Activated naive CD4-positive, alpha-beta T cell treated with anti-CD3 and anti-CD28 coated beads for 36 hours (primary cell): ENCODE measurements at regions of chr11 and their contacts with region 1.

Region 1: GRCh38 chr11:123407130-123407995 is 22.7 kb upstream of the GRAMD1B start:
- DNase-seq: peak; percentile 83
- H3K4me3 Mint-ChIP-seq: peak overlapping the region; percentile 61
- H3K27ac Mint-ChIP-seq: peak overlapping the region; percentile 37
- H3K4me1 Mint-ChIP-seq: peaks cover 36% of the 10 kb centered on the region
- H3K27me3 Mint-ChIP-seq: peaks cover 18% of the 10 kb centered on the region

Region 2: DNA sequence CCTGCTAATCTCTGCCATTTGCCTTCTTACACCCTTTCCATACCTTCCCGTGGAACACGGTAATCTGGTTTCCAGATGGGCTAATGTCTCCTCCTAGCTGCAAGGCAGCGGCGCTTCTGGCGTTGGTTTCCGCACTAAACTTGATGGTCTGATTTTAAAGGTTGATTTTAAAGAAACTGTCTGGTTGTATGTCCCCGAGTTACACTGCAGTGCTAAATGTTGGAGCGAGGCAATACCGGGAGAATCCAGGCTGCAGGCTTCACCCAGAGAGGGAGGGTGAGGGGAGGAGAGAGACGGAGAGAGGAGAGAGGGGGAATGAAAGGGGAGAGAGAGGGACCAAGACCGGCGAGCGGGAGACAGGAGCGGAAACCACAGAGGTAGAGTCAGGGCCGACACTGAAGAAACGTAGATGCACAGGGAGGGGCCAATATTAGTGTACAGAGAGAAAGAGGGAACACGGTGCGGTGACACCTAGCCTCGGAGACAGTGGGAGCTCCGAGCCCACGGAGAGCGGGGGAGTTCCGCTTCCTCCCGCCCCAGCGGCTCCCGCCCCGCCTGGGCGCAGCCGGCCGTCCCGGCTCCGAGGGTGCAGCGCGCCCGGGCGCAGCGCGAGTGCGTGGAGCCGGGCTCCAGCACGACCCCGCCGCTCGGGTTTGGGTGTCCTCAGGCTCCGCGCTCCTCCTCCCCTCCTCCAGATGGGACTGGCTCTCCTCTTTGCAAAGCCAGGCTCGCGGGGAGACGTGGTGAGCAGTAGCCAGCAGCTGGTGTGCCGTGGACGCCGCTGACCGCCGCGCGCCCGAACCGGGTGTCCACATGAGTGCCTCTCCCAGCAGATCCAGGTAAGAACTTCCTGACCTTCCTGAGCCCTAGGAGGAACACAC is 49.2 kb before region 1 on chr11:
- CTCF ChIA-PET with region 1: interaction called, 23 read pairs
- intact Hi-C with region 1: loop called (anchors 1 kb)
- DNase-seq: peak; percentile 71
- H3K4me3 Mint-ChIP-seq: peak overlapping the region; percentile 87
- H3K27ac Mint-ChIP-seq: peak overlapping the region; percentile 77
- H3K4me1 Mint-ChIP-seq: peaks cover 42% of the 10 kb centered on the region
- H3K27me3 Mint-ChIP-seq: peaks cover 40% of the 10 kb centered on the region

Region 3: GRCh38 chr11:123429913-123430720 is 22.8 kb after region 1 on chr11 and contains the start of gene GRAMD1B:
- CTCF ChIA-PET with region 1: interaction called, 31 read pairs
- intact Hi-C with region 1: loop called (anchors 1 kb)
- DNase-seq: peak; percentile 87
- H3K4me3 Mint-ChIP-seq: peak within 1 kb of the TSS; percentile 92
- H3K27ac Mint-ChIP-seq: peak within 1 kb of the TSS; percentile 85
- H3K4me1 Mint-ChIP-seq: peaks cover 33% of the 10 kb centered on the region
- H3K27me3 Mint-ChIP-seq: peaks cover 2% of the 10 kb centered on the region
- total RNA-seq, gene GRAMD1B: 43.7 to 47.2 TPM

Region 4: GRCh38 chr11:123454060-123454651 is 46.8 kb after region 1 on chr11:
- CTCF ChIA-PET with region 1: interaction called, 8 read pairs
- intact Hi-C with region 1: loop called (anchors 1 kb)
- DNase-seq: peak; percentile 93
- H3K4me3 Mint-ChIP-seq: peak overlapping the region; percentile 72
- H3K27ac Mint-ChIP-seq: peak overlapping the region; percentile 93
- H3K4me1 Mint-ChIP-seq: peaks cover 73% of the 10 kb centered on the region
- H3K27me3 Mint-ChIP-seq: no peaks in the 10 kb centered on the region

Region 5: DNA sequence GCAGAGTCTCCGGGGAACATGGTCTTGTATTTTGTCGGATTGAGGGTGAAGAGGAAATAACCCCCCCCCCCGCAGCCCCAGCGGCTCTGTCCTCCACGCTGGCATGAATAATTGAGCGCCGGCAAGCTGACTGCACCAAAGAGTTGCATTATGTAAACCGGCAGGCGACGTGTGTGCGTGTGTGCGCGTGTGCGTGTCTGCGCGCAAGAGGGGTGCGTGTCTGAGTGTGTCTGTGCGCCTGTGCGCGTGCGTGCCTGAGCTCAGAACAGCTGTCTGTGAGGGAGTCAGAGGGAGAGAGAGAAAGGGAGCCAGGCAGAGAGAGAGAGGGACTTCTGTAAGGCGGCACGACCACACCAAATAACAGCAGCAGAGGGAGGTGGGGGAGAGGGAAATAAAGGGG is 152.6 kb after region 1 on chr11:
- CTCF ChIA-PET with region 1: interaction called, 3 read pairs
- intact Hi-C with region 1: loop called (anchors 1 kb)
- DNase-seq: peak; percentile 64
- H3K4me3 Mint-ChIP-seq: peak overlapping the region; percentile 68
- H3K27ac Mint-ChIP-seq: no peak overlapping the region
- H3K4me1 Mint-ChIP-seq: peaks cover 14% of the 10 kb centered on the region
- H3K27me3 Mint-ChIP-seq: peaks cover 3% of the 10 kb centered on the region